Transverse colon (tissue), 4 donors: ENCODE measurements at regions of chr15 and their contacts with region 1.

Region 1: GRCh38 chr15:90954712-90955671 is at the start of gene RCCD1:
- DNase-seq: peak; percentile 96
- H3K4me3 ChIP-seq: peak within 1 kb of the TSS; percentile 49 to 73 (median 62)
- H3K27ac ChIP-seq: peak within 1 kb of the TSS; percentile 93 to 98 (median 94)
- H3K4me1 ChIP-seq: peaks cover 11 to 32% (median 20%) of the 10 kb centered on the region in 4 donors
- H3K27me3 ChIP-seq: no peaks in the 10 kb centered on the region
- CTCF ChIP-seq: no peak
- EP300 ChIP-seq: no peak
- POLR2A ChIP-seq: peak; percentile 75
- total RNA-seq, gene RCCD1: 13.1 to 438 (median 16.2) TPM

Region 2: GRCh38 chr15:91032919-91033803 is 78.2 kb after region 1 on chr15:
- in situ Hi-C with region 1: no loop called
- intact Hi-C with region 1: loop called (anchors 10 kb)
- DNase-seq: peak; percentile 88
- H3K4me3 ChIP-seq: no peak overlapping the region
- H3K27ac ChIP-seq: no peak overlapping the region
- H3K4me1 ChIP-seq: peaks cover 0 to 3% (median 0%) of the 10 kb centered on the region in 4 donors
- H3K27me3 ChIP-seq: no peaks in the 10 kb centered on the region
- CTCF ChIP-seq: peak; percentile 58 to 89 (median 73)
- EP300 ChIP-seq: no peak
- POLR2A ChIP-seq: no peak